ENCODE measurements at regions of chr7 and their contacts with region 1.

Region 1: GRCh38 chr7:5088906-5089305 is 43.2 kb downstream of the RBAK start:
- DNase-seq: peak; percentile 73 to 84
- H3K4me3 ChIP-seq: no peak overlapping the region; the same call in 1 of the 2 replicates
- H3K27ac ChIP-seq: no peak overlapping the region
- H3K4me1 ChIP-seq: peaks cover 6% of the 10 kb centered on the region; the same call in 1 of the 2 replicates
- H3K27me3 ChIP-seq: peaks cover 6% of the 10 kb centered on the region; the same call in 1 of the 2 replicates
- CTCF ChIP-seq: no peak

Region 2: DNA sequence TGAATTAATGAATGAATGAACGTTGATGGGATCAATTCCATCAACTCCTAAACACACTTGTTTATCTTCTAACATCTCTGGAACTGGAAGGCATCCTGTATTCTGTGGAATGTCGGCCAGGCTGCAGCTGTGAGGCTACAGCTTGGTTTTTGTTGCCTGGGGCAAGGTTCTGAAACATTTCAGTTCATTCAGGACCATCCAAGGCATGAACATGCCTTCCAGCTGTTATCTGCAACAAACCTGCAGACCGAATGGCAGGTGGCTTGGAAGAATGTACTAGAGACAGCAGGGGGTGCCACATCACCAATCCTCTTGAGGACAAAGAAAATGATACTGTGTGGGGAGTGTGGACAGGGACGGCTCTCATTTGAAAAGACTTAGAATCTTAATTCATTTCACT is 239.5 kb before region 1 on chr7:
- CTCF ChIA-PET with region 1: interaction called, 3 read pairs
- POLR2A ChIA-PET with region 1: no interaction called
- intact Hi-C with region 1: loop called (anchors 5 kb)
- DNase-seq: peak in 1 of 2 experiments; percentile 17
- H3K4me3 ChIP-seq: no peak overlapping the region
- H3K27ac ChIP-seq: no peak overlapping the region
- H3K4me1 ChIP-seq: no peaks in the 10 kb centered on the region
- H3K27me3 ChIP-seq: peaks cover 76% of the 10 kb centered on the region
- CTCF ChIP-seq: peak; percentile 53

Region 3: DNA sequence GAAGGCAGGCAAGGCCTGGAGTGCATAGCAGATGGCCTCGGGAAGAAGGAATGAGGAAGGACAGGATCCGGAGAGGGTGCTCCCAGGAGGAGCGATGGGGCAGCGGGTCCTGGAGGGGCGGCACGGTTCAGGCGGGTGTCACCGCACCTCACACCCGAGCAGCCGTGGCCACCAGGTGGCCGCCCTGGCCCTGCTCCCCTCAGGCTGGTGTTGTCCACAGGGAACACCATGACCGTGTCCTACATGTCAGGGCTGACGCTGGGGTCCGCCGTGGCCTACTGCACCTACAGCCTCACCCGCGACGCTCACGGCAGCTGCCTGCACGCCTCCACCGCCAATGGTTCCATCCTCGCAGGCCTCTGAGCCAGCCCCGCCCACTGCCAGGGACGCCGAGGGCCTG is 213.7 kb after region 1 on chr7:
- CTCF ChIA-PET with region 1: no interaction called
- POLR2A ChIA-PET with region 1: no interaction called
- intact Hi-C with region 1: no loop called
- DNase-seq: no peak
- H3K4me3 ChIP-seq: no peak overlapping the region
- H3K27ac ChIP-seq: no peak overlapping the region
- H3K4me1 ChIP-seq: no peaks in the 10 kb centered on the region
- H3K27me3 ChIP-seq: peaks cover 14% of the 10 kb centered on the region; the same call in 1 of the 2 replicates
- CTCF ChIP-seq: no peak

Measured in PC-9 (cell line).